ENCODE measurements at regions of chr18 and their contacts with region 1.

Region 1: GRCh38 chr18:76709659-76710645 is 112.4 kb upstream of the ZNF236 start:
- DNase-seq: peak; percentile 78
- CTCF ChIP-seq: peak; percentile 76

Region 2: DNA sequence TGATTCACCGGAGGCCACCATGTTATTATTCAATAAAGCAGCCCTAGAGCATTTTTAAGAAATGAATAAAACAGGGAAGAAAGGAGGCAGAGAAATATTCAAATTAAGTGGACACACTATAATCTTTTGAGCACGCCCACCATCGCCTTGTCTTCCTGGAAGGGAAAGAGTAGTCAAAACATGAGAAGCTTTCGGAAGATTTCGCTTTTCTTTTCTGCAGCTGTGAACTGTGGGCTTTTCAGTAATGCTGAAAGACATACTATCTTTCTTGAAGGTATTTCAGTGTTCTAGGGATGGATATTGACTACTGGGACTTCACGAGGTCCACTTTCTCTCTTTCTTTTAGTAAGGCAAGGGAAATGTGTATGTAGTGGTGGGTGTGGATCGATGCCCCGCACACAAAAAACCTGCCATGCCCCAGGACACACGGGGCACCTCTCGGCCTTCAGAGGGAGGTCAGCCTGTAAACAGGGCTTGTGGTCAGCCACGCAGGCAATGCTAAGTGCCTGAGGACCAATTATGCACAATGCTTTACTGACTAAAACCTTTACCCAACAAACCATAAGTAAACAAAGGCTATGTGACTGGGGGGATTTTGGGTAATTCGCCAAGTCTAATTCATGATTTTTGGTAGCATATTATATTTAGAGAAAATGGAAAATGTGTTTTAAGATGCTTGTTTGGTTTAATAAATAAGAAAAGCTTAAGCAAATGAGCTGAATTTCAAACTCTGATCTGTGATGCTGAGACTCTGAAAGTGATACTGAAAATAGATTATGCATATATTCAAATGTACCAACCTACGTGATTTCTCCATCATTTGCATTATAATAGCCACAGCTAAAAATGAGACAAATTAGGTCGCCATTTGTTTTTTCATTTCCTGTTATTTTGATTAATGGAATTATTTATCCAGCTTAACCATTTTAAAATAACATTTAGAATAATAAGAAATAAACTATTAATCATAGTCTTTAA is 345.4 kb before region 1 on chr18:
- in situ Hi-C with region 1: no loop called
- DNase-seq: peak; percentile 77
- CTCF ChIP-seq: no peak

Region 3: GRCh38 chr18:76398896-76399612 is 310.9 kb before region 1 on chr18:
- in situ Hi-C with region 1: loop called (anchors 5 kb)
- DNase-seq: peak; percentile 89
- CTCF ChIP-seq: peak; percentile 95

Region 4: GRCh38 chr18:77101410-77102258 is 391.7 kb after region 1 on chr18:
- in situ Hi-C with region 1: no loop called
- DNase-seq: peak; percentile 72
- CTCF ChIP-seq: no peak